CD8-positive, alpha-beta T cell (primary cell): ENCODE measurements at regions of chr7 and their contacts with region 1.

Region 1: GRCh38 chr7:116236020-116236630 is 25.8 kb downstream of the TES start:
- DNase-seq: peak; percentile 28 to 79 (median 66)
- ATAC-seq: peak; percentile 82
- H3K4me3 ChIP-seq: no peak overlapping the region
- H3K4me3 Mint-ChIP-seq: no peak overlapping the region
- H3K27ac ChIP-seq: peak overlapping the region in 1 of 2 experiments; percentile 9
- H3K27ac Mint-ChIP-seq: no peak overlapping the region
- H3K4me1 ChIP-seq: peaks cover 43% of the 10 kb centered on the region
- H3K4me1 Mint-ChIP-seq: peaks cover 67% of the 10 kb centered on the region
- H3K27me3 ChIP-seq: no peaks in the 10 kb centered on the region
- H3K27me3 Mint-ChIP-seq: no peaks in the 10 kb centered on the region
- CTCF ChIP-seq: peak; percentile 87

Region 2: GRCh38 chr7:115116773-115117715 is 1119.1 kb before region 1 on chr7:
- CTCF ChIA-PET with region 1: no interaction called
- POLR2A ChIA-PET with region 1: no interaction called
- intact Hi-C with region 1: no loop called
- DNase-seq: no peak
- ATAC-seq: no peak
- H3K4me3 ChIP-seq: no peak overlapping the region
- H3K4me3 Mint-ChIP-seq: no peak overlapping the region
- H3K27ac ChIP-seq: no peak overlapping the region
- H3K27ac Mint-ChIP-seq: no peak overlapping the region
- H3K4me1 ChIP-seq: no peaks in the 10 kb centered on the region
- H3K4me1 Mint-ChIP-seq: peaks cover under 1% of the 10 kb centered on the region
- H3K27me3 ChIP-seq: no peaks in the 10 kb centered on the region
- H3K27me3 Mint-ChIP-seq: peaks cover 3% of the 10 kb centered on the region
- CTCF ChIP-seq: no peak

Region 3: GRCh38 chr7:116165717-116166116 is 70.4 kb before region 1 on chr7:
- CTCF ChIA-PET with region 1: interaction called, 70 read pairs
- POLR2A ChIA-PET with region 1: no interaction called
- intact Hi-C with region 1: no loop called
- DNase-seq: peak in 1 of 9 experiments; percentile 29
- ATAC-seq: no peak
- H3K4me3 ChIP-seq: no peak overlapping the region
- H3K4me3 Mint-ChIP-seq: no peak overlapping the region
- H3K27ac ChIP-seq: no peak overlapping the region
- H3K27ac Mint-ChIP-seq: no peak overlapping the region
- H3K4me1 ChIP-seq: peaks cover 10% of the 10 kb centered on the region
- H3K4me1 Mint-ChIP-seq: peaks cover 9% of the 10 kb centered on the region
- H3K27me3 ChIP-seq: no peaks in the 10 kb centered on the region
- H3K27me3 Mint-ChIP-seq: peaks cover 4% of the 10 kb centered on the region
- CTCF ChIP-seq: no peak

Region 4: GRCh38 chr7:116185956-116186355 is 50.2 kb before region 1 on chr7:
- CTCF ChIA-PET with region 1: interaction called, 282 read pairs
- POLR2A ChIA-PET with region 1: no interaction called
- intact Hi-C with region 1: no loop called
- DNase-seq: no peak
- ATAC-seq: no peak
- H3K4me3 ChIP-seq: no peak overlapping the region
- H3K4me3 Mint-ChIP-seq: no peak overlapping the region
- H3K27ac ChIP-seq: no peak overlapping the region
- H3K27ac Mint-ChIP-seq: no peak overlapping the region
- H3K4me1 ChIP-seq: no peaks in the 10 kb centered on the region
- H3K4me1 Mint-ChIP-seq: no peaks in the 10 kb centered on the region
- H3K27me3 ChIP-seq: no peaks in the 10 kb centered on the region
- H3K27me3 Mint-ChIP-seq: peaks cover 6% of the 10 kb centered on the region
- CTCF ChIP-seq: no peak

Region 5: DNA sequence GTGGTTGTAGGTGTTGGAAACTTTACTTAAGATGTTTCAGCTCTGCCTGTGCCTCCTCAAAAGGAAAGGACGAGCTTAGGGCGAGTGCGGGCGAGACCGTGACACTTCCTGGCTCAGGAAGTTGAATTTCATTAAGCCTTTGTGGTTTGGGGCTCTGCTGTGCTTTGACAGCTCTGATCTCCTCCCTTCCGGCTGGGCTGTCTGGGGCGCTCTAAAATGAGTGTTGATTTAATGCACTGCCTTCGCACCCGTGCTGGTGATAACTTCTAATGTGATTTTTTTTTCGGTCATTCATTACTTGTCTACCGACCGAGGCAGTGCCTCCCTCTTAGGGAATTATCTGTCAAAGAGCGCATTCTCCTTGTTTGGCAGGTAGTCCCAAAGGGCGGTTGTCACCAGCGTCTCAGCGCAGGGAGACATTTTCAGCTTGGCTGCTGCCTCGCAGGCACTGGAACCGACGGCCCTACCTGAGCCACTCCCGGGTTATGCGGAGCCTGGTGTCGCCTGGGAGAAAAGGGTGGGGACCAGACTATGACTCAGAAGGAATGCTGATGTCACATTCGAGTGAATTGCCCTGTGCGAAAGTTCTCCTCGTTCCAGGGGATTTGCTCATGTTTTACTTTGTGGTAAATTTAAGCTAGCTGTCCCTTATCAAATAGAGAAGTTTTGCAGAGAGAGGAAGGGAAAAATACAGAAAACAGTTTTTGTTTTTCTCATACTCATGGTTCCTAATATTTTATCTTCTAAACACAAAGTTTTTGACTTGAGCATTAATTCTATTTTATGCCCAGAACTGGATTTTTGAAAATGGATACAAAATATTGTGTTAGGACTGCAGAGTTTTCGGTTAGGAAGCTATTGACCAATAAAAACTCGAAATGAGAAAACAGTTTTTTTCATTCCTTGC is 24.9 kb before region 1 on chr7:
- CTCF ChIA-PET with region 1: interaction called, 63 read pairs
- POLR2A ChIA-PET with region 1: interaction called, 9 read pairs
- intact Hi-C with region 1: loop called in 1 of 2 experiments (anchors 1 kb)
- DNase-seq: peak; percentile 62 to 94 (median 83)
- ATAC-seq: peak; percentile 77
- H3K4me3 ChIP-seq: peak overlapping the region; percentile 71 to 86
- H3K4me3 Mint-ChIP-seq: peak overlapping the region; percentile 98
- H3K27ac ChIP-seq: peak overlapping the region; percentile 91 to 93
- H3K27ac Mint-ChIP-seq: peak overlapping the region; percentile 99
- H3K4me1 ChIP-seq: peaks cover 50% of the 10 kb centered on the region
- H3K4me1 Mint-ChIP-seq: peaks cover 57% of the 10 kb centered on the region
- H3K27me3 ChIP-seq: no peaks in the 10 kb centered on the region
- H3K27me3 Mint-ChIP-seq: no peaks in the 10 kb centered on the region
- CTCF ChIP-seq: no peak

Region 6: GRCh38 chr7:116249708-116250553 is 13.8 kb after region 1 on chr7:
- CTCF ChIA-PET with region 1: interaction called, 11 read pairs
- POLR2A ChIA-PET with region 1: no interaction called
- intact Hi-C with region 1: loop called in 1 of 2 experiments (anchors 2 kb)
- DNase-seq: peak in 2 of 9 experiments; percentile 26 to 38
- ATAC-seq: peak; percentile 68
- H3K4me3 ChIP-seq: no peak overlapping the region
- H3K4me3 Mint-ChIP-seq: no peak overlapping the region
- H3K27ac ChIP-seq: no peak overlapping the region
- H3K27ac Mint-ChIP-seq: peak overlapping the region; percentile 12
- H3K4me1 ChIP-seq: no peaks in the 10 kb centered on the region
- H3K4me1 Mint-ChIP-seq: peaks cover 25% of the 10 kb centered on the region
- H3K27me3 ChIP-seq: no peaks in the 10 kb centered on the region
- H3K27me3 Mint-ChIP-seq: no peaks in the 10 kb centered on the region
- CTCF ChIP-seq: peak; percentile 15